ENCODE measurements at regions of chr6 and their contacts with region 1.

Region 1: DNA sequence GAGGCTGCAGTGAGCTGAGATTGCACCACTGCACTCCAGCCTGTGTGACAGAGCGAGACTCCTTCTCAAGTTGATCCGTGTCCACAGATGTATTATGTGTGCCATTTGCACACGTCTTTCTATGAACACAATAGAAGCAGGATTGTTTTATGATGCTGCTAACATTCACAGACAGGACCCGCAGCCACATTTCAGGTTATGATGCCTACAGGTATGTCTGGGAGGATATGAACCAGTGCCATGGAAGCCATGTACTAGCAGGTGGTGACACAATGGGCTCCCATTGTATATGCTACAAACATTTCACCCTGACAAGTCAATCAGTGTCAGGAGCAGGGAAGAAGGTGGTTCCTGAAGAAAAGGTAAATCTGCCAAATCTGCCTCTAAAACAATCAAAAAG is 4.3 kb downstream of the TRAM2 start:
- DNase-seq: no peak
- ATAC-seq: no peak
- H3K4me3 Mint-ChIP-seq: no peak overlapping the region
- H3K27ac Mint-ChIP-seq: no peak overlapping the region
- H3K4me1 Mint-ChIP-seq: peaks cover 23% of the 10 kb centered on the region
- H3K27me3 Mint-ChIP-seq: peaks cover 32% of the 10 kb centered on the region

Region 2: GRCh38 chr6:52546678-52547077 is 25.9 kb before region 1 on chr6:
- POLR2A ChIA-PET with region 1: no interaction called
- DNase-seq: no peak
- ATAC-seq: no peak
- H3K4me3 Mint-ChIP-seq: no peak overlapping the region
- H3K27ac Mint-ChIP-seq: no peak overlapping the region
- H3K4me1 Mint-ChIP-seq: no peaks in the 10 kb centered on the region
- H3K27me3 Mint-ChIP-seq: no peaks in the 10 kb centered on the region

Region 3: DNA sequence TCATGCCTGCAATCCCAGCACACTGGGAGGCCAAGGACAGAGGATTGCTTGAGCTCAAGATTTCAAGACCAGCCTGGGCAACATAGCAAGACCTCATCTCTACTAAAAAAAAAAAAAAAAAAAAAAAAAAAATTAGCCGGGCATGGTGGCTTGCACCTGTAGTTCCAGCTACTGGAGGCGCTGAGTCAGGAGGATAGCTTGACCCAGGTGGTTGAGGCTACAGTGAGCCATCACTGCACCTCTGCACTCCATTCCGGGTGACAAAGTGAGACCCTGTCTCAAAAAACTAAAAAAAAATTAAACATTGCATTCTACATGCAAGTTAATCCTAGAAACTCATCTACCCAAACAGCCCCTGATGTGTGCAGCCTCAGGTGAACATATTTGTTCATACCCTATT is 11.7 kb after region 1 on chr6:
- POLR2A ChIA-PET with region 1: interaction called, 11 read pairs
- DNase-seq: no peak
- ATAC-seq: no peak
- H3K4me3 Mint-ChIP-seq: no peak overlapping the region
- H3K27ac Mint-ChIP-seq: no peak overlapping the region
- H3K4me1 Mint-ChIP-seq: no peaks in the 10 kb centered on the region
- H3K27me3 Mint-ChIP-seq: peaks cover 32% of the 10 kb centered on the region

Region 4: DNA sequence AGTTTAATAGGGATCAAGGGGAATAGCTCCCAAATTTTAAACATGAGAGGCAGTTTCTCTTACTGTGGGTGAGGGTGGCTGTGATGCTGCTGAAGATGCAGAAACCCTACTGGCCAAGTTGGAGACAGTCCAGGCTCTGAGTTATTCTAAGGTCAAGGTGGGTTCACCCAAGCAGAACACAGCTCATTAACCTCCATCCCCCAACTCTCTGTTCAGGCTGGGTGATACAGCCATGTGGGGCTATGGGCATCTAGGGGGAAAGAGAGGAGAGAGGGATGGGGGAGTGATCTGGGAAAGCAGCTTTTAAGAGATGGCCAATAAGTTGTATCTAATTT is 23.2 kb after region 1 on chr6:
- POLR2A ChIA-PET with region 1: no interaction called
- DNase-seq: no peak
- ATAC-seq: no peak
- H3K4me3 Mint-ChIP-seq: no peak overlapping the region
- H3K27ac Mint-ChIP-seq: no peak overlapping the region
- H3K4me1 Mint-ChIP-seq: peaks cover 14% of the 10 kb centered on the region
- H3K27me3 Mint-ChIP-seq: peaks cover 3% of the 10 kb centered on the region